ENCODE measurements at regions of chr11 and their contacts with region 1.

Region 1: GRCh38 chr11:124673333-124674167 is at the starts of genes SIAE and SPA17:
- DNase-seq: peak; percentile 91
- H3K4me3 Mint-ChIP-seq: peak within 1 kb of the TSS; percentile 84
- H3K27ac Mint-ChIP-seq: peak within 1 kb of the TSS; percentile 79
- H3K4me1 Mint-ChIP-seq: peaks cover 44% of the 10 kb centered on the region
- H3K27me3 Mint-ChIP-seq: peaks cover 3% of the 10 kb centered on the region
- total RNA-seq, gene SIAE: 5.1 to 8.2 TPM
- total RNA-seq, gene SPA17: 3.4 to 3.8 TPM

Region 2: DNA sequence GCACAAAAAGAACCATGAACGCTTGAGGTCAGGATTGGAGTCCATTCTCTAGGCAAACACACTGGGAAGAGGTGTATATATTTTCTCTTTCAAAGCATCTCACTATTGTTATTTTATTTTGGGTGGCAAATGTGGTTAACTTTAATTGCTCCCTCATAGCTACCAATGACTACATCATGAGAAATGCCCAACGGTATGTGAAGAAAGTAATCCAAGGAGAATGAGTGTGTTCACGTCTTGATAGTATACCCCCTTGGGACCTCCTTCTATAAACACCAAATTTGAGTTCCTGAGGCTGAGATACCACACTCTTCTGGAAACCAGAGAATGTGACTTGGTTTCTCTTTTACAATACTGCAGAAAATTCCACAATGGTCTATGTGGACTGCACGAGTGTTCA is 375.6 kb before region 1 on chr11:
- CTCF ChIA-PET with region 1: no interaction called
- POLR2A ChIA-PET with region 1: no interaction called
- DNase-seq: no peak
- H3K4me3 Mint-ChIP-seq: no peak overlapping the region
- H3K27ac Mint-ChIP-seq: no peak overlapping the region
- H3K4me1 Mint-ChIP-seq: no peaks in the 10 kb centered on the region
- H3K27me3 Mint-ChIP-seq: no peaks in the 10 kb centered on the region

Region 3: DNA sequence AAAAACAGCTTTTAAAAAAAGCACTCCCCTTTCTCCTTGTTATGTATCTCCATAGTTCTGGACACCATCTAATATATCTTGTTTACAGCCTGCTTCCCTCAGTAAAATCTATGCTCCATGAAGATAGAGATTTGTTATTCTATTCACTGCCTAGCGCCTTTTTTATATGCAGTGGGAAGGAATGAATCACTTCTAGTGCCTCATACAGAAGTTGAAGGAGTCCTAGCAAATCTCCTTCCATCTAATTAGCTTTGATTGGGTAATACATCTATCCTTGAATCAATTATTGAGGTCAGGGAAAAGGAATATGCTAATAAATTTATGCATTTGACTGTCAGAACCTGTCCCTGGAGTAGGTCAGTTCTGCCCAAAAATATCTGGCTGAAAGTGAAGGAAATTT is 26.0 kb after region 1 on chr11:
- CTCF ChIA-PET with region 1: no interaction called
- POLR2A ChIA-PET with region 1: no interaction called
- DNase-seq: no peak
- H3K4me3 Mint-ChIP-seq: no peak overlapping the region
- H3K27ac Mint-ChIP-seq: no peak overlapping the region
- H3K4me1 Mint-ChIP-seq: no peaks in the 10 kb centered on the region
- H3K27me3 Mint-ChIP-seq: peaks cover 16% of the 10 kb centered on the region

Region 4: DNA sequence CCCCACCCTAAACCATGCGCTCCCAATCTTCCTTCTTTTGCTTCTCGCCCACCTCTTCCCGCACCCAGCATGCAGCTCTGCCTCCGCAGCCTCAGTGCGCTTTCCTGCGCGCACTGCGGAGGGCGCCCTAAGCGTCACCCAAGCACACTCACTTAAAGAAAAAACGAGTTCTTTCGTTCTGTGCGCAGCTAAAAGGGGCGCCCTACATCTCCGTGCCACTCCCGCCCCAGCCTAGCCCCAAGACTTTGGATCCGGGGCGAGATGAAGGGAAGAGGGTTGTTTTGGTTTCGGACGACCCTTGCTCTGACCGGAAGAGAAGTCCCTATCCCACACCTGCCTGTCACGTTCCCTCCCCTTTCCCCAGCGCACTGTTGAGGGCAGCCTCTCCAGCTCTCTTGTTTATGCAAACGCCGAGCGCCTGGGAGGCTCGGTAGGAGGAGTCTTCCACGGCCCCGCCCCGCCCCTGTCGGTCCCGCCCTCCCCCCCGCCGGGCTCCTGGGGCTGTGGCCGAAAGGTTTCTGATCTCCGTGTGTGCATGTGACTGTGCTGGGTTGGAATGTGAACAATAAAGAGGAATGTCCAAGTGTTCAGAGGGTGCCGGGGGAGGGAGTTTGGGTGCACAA is 73.2 kb after region 1 on chr11:
- CTCF ChIA-PET with region 1: interaction called, 14 read pairs
- POLR2A ChIA-PET with region 1: interaction called, 3 read pairs
- DNase-seq: peak; percentile 83
- H3K4me3 Mint-ChIP-seq: peak overlapping the region; percentile 95
- H3K27ac Mint-ChIP-seq: peak overlapping the region; percentile 89
- H3K4me1 Mint-ChIP-seq: peaks cover 32% of the 10 kb centered on the region
- H3K27me3 Mint-ChIP-seq: peaks cover 8% of the 10 kb centered on the region

Region 5: GRCh38 chr11:124758317-124759203 is 85.0 kb after region 1 on chr11:
- CTCF ChIA-PET with region 1: interaction called, 72 read pairs
- POLR2A ChIA-PET with region 1: interaction called, 3 read pairs
- DNase-seq: peak; percentile 73
- H3K4me3 Mint-ChIP-seq: peak overlapping the region; percentile 28
- H3K27ac Mint-ChIP-seq: no peak overlapping the region
- H3K4me1 Mint-ChIP-seq: peaks cover 23% of the 10 kb centered on the region
- H3K27me3 Mint-ChIP-seq: peaks cover 57% of the 10 kb centered on the region

Region 6: DNA sequence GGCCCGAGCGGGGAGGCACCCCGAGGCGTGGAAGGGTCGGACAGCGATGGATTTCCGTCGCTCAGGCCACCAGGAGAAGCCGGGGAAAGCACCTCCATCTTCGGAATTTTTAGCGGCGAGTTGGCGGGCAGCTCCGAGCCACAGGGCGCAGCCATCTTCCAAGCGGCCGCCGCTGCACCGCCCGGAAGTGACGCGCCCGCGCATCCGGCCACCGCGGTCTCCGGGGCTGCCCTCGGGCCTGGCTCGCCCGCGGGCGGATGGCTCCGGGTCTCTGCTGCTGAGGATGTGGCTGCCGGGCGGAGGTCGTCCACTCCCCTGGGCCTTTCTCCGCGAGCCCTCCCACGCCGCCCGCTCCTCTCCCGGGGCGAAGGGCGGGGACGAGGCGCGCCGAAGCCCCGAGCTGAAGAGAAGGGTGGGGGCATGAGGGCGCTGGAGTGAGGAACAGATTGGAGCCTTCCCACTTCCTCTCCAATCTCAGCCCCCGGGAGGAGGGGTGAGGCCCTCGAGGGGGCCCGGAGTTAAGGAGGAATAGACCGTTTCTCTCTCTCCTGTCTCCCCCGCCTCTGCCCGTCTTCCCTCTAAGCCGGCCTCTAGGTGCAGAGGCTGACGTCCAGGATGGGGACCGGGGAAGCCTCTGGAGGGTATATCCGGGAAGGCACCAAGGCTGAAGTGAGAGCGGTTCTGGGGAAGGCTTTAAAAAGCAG is 126.8 kb after region 1 on chr11 and contains the start of gene MSANTD2:
- CTCF ChIA-PET with region 1: interaction called, 32 read pairs
- POLR2A ChIA-PET with region 1: interaction called, 14 read pairs
- DNase-seq: peak; percentile 86
- H3K4me3 Mint-ChIP-seq: peak within 1 kb of the TSS; percentile 88
- H3K27ac Mint-ChIP-seq: peak within 1 kb of the TSS; percentile 89
- H3K4me1 Mint-ChIP-seq: peaks cover 38% of the 10 kb centered on the region
- H3K27me3 Mint-ChIP-seq: peaks cover 2% of the 10 kb centered on the region
- total RNA-seq, gene MSANTD2: 9.4 to 10.4 TPM

Measured in activated CD4-positive, alpha-beta memory T cell treated with anti-CD3 and anti-CD28 coated beads, Interleukin-2, amount 10 ng/mL, durations not matched to agents 7 days and 5 days (primary cell).